ENCODE measurements at regions of chr16 and their contacts with region 1.

Region 1: GRCh38 chr16:27455700-27456099 is 53.7 kb downstream of the IL21R start:
- DNase-seq: peak in 2 of 5 donors; percentile 25 to 30
- ATAC-seq: peak in 3 of 4 donors; percentile 10 to 70 (median 29)
- H3K4me3 ChIP-seq: no peak overlapping the region
- H3K27ac ChIP-seq: peak overlapping the region in 2 of 12 donors; percentile 14 to 24
- H3K4me1 ChIP-seq: peaks cover 0 to 40% (median 11%) of the 10 kb centered on the region in 12 donors
- H3K27me3 ChIP-seq: peaks cover 0 to 10% (median 0%) of the 10 kb centered on the region in 9 donors
- CTCF ChIP-seq: no peak
- POLR2A ChIP-seq: no peak

Region 2: GRCh38 chr16:27154705-27155521 is 300.8 kb before region 1 on chr16:
- intact Hi-C with region 1: loop called in 4 of 10 experiments (anchors 1 to 5 kb)
- DNase-seq: peak; percentile 37 to 82 (median 46)
- ATAC-seq: peak in 3 of 4 donors; percentile 70 to 86 (median 72)
- H3K4me3 ChIP-seq: no peak overlapping the region
- H3K27ac ChIP-seq: no peak overlapping the region
- H3K4me1 ChIP-seq: peaks cover 0 to 6% (median 0%) of the 10 kb centered on the region in 12 donors
- H3K27me3 ChIP-seq: no peaks in the 10 kb centered on the region
- CTCF ChIP-seq: peak; percentile 79 to 99 (median 95)
- POLR2A ChIP-seq: no peak

Region 3: DNA sequence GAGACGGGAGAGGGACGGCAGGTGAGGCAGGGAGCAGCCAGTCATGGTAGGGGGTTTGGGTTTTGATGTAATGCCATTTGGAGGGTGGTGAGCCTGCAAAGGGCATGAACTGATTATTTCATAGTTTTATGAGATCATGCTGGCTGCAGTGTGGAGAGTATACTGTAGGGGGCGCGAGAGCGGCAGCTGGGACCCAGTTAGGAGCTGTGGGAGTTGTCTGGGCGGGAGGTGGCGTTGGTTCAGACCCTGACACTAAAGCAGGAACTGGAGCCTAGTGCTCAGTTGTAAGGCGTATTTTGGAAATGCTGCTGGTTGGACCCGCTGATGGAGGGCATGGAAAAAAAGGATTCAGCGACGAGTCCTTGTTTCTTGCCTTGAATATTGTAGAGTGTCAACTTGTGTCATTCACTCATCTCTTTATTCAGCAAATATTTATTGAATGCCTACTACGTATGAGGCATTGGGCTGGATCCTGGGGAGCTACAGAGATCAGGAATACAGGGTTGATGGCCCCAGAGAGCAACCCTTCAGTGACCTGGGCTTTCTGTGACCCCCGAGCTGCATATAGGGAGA is 276.1 kb before region 1 on chr16:
- intact Hi-C with region 1: loop called (anchors 1 to 5 kb)
- DNase-seq: peak; percentile 83 to 91 (median 86)
- ATAC-seq: peak; percentile 79 to 98 (median 96)
- H3K4me3 ChIP-seq: no peak overlapping the region
- H3K27ac ChIP-seq: no peak overlapping the region
- H3K4me1 ChIP-seq: peaks cover 0 to 9% (median 0%) of the 10 kb centered on the region in 12 donors
- H3K27me3 ChIP-seq: no peaks in the 10 kb centered on the region
- CTCF ChIP-seq: peak; percentile 85 to 97 (median 93)
- POLR2A ChIP-seq: no peak

Region 4: GRCh38 chr16:27235055-27235937 is 220.4 kb before region 1 on chr16:
- intact Hi-C with region 1: loop called in 2 of 10 experiments (anchors 2 to 5 kb)
- DNase-seq: peak; percentile 88 to 94 (median 91)
- ATAC-seq: peak; percentile 57 to 82 (median 81)
- H3K4me3 ChIP-seq: peak overlapping the region in 7 of 12 donors; percentile 5 to 31 (median 11)
- H3K27ac ChIP-seq: peak overlapping the region; percentile 24 to 91 (median 60)
- H3K4me1 ChIP-seq: peaks cover 0 to 73% (median 35%) of the 10 kb centered on the region in 12 donors
- H3K27me3 ChIP-seq: no peaks in the 10 kb centered on the region
- CTCF ChIP-seq: peak; percentile 67 to 93 (median 82)
- POLR2A ChIP-seq: no peak

Measured in heart left ventricle (tissue), 16 donors.